Activated CD4-positive, alpha-beta T cell treated with anti-CD3 and anti-CD28 coated beads, Interleukin-2, amount 10 ng/mL, durations not matched to agents 24 days and 14 days (primary cell): ENCODE measurements at regions of chr9 and their contacts with region 1.

Region 1: GRCh38 chr9:130015353-130016019 is 27.5 kb downstream of the FNBP1 start:
- DNase-seq: no peak
- H3K4me3 Mint-ChIP-seq: no peak overlapping the region
- H3K27ac Mint-ChIP-seq: peak overlapping the region; percentile 45
- H3K4me1 Mint-ChIP-seq: peaks cover 44% of the 10 kb centered on the region
- H3K27me3 Mint-ChIP-seq: no peaks in the 10 kb centered on the region

Region 2: DNA sequence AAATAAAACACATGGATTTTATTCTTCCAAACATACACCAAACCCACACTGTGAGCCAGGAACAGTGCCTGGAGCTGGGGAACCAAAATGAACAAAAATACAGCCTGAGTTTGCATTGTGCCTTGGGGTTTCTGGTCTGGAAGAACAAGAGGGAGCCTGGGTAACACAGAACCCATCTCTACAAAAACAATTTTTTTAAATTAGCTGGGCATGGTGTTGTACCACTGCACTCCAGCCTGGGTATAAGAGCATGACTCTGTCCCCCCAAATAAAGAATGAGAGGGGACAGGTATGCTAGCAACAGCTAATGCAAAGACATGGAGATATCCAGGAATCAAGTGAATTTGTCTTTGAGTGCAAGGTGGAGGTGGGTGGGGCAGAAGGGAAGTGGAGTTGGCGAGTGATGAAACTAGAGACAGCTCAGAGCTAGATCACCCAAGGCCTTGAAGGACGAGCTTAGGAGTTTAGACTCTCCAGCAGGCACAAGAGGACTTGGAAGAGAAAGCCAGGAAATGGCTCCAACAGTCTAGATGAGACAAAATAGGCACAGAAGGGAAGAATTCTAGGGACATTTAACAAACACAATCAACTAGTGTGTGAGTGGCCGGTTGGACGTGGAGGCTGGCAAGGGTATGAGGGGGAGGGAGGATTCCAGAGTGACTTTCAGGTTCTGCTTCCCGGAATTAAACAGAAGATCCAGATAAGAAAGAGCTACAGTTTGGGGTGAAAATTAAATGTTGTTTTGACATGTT is 19.9 kb before region 1 on chr9:
- intact Hi-C with region 1: loop called (anchors 1 kb)
- DNase-seq: peak; percentile 77
- H3K4me3 Mint-ChIP-seq: peak overlapping the region; percentile 75
- H3K27ac Mint-ChIP-seq: peak overlapping the region; percentile 95
- H3K4me1 Mint-ChIP-seq: peaks cover 56% of the 10 kb centered on the region
- H3K27me3 Mint-ChIP-seq: no peaks in the 10 kb centered on the region

Region 3: GRCh38 chr9:130036099-130036498 is 20.6 kb after region 1 on chr9:
- intact Hi-C with region 1: loop called (anchors 1 kb)
- DNase-seq: no peak
- H3K4me3 Mint-ChIP-seq: peak overlapping the region; percentile 84
- H3K27ac Mint-ChIP-seq: peak overlapping the region; percentile 95
- H3K4me1 Mint-ChIP-seq: peaks cover 69% of the 10 kb centered on the region
- H3K27me3 Mint-ChIP-seq: no peaks in the 10 kb centered on the region